B cell (primary cell): ENCODE measurements at regions of chr1 and their contacts with region 1.

Region 1: DNA sequence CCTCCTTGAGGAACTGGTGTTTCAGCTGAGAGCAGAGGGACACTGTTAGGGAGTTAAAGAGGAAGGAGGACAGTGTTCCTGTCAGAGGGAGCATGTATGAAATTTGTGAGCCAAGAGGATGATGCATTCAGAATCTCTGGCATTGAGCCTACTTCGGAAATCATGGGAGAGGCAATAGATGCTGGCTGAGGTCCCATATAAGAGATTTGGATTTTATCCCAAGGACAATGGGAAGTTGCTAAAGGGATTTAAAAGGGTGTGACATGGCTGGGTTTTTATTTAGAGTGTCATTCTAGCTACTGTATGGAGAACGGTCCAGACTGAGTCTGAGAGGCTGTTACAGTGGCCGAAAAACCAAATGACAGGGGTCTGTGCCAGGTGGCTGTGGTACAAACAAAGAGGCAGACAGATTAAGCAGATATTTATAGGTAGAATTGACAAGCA is 403.2 kb upstream of the B3GALT2 start:
- DNase-seq: no peak
- ATAC-seq: no peak
- H3K4me3 ChIP-seq: no peak overlapping the region
- H3K4me3 Mint-ChIP-seq: no peak overlapping the region
- H3K27ac ChIP-seq: no peak overlapping the region
- H3K27ac Mint-ChIP-seq: peak overlapping the region; percentile 22
- H3K4me1 ChIP-seq: peaks cover 4 to 19% of the 10 kb centered on the region in 2 donors
- H3K4me1 Mint-ChIP-seq: peaks cover 13% of the 10 kb centered on the region
- H3K27me3 ChIP-seq: no peaks in the 10 kb centered on the region
- H3K27me3 Mint-ChIP-seq: peaks cover 4% of the 10 kb centered on the region
- CTCF ChIP-seq: no peak

Region 2: GRCh38 chr1:193406901-193407300 is 182.7 kb before region 1 on chr1:
- CTCF ChIA-PET with region 1: no interaction called
- POLR2A ChIA-PET with region 1: no interaction called
- intact Hi-C with region 1: loop called (anchors 5 kb)
- DNase-seq: peak; percentile 62
- ATAC-seq: peak; percentile 53
- H3K4me3 ChIP-seq: no peak overlapping the region
- H3K4me3 Mint-ChIP-seq: no peak overlapping the region
- H3K27ac ChIP-seq: no peak overlapping the region
- H3K27ac Mint-ChIP-seq: no peak overlapping the region
- H3K4me1 ChIP-seq: peaks cover 0 to 6% of the 10 kb centered on the region in 2 donors
- H3K4me1 Mint-ChIP-seq: peaks cover 5% of the 10 kb centered on the region
- H3K27me3 ChIP-seq: no peaks in the 10 kb centered on the region
- H3K27me3 Mint-ChIP-seq: no peaks in the 10 kb centered on the region
- CTCF ChIP-seq: peak; percentile 85

Region 3: GRCh38 chr1:193545171-193545570 is 44.4 kb before region 1 on chr1:
- CTCF ChIA-PET with region 1: no interaction called
- POLR2A ChIA-PET with region 1: no interaction called
- intact Hi-C with region 1: loop called (anchors 5 kb)
- DNase-seq: no peak
- ATAC-seq: no peak
- H3K4me3 ChIP-seq: no peak overlapping the region
- H3K4me3 Mint-ChIP-seq: no peak overlapping the region
- H3K27ac ChIP-seq: no peak overlapping the region
- H3K27ac Mint-ChIP-seq: no peak overlapping the region
- H3K4me1 ChIP-seq: peaks cover 6 to 11% of the 10 kb centered on the region in 2 donors
- H3K4me1 Mint-ChIP-seq: peaks cover 12% of the 10 kb centered on the region
- H3K27me3 ChIP-seq: no peaks in the 10 kb centered on the region
- H3K27me3 Mint-ChIP-seq: no peaks in the 10 kb centered on the region
- CTCF ChIP-seq: no peak